HEK293T (cell line): ENCODE measurements at regions of chr20 and their contacts with region 1.

Region 1: GRCh38 chr20:32830437-32830836 is 10.7 kb downstream of the MAPRE1 start:
- DNase-seq: no peak

Region 2: DNA sequence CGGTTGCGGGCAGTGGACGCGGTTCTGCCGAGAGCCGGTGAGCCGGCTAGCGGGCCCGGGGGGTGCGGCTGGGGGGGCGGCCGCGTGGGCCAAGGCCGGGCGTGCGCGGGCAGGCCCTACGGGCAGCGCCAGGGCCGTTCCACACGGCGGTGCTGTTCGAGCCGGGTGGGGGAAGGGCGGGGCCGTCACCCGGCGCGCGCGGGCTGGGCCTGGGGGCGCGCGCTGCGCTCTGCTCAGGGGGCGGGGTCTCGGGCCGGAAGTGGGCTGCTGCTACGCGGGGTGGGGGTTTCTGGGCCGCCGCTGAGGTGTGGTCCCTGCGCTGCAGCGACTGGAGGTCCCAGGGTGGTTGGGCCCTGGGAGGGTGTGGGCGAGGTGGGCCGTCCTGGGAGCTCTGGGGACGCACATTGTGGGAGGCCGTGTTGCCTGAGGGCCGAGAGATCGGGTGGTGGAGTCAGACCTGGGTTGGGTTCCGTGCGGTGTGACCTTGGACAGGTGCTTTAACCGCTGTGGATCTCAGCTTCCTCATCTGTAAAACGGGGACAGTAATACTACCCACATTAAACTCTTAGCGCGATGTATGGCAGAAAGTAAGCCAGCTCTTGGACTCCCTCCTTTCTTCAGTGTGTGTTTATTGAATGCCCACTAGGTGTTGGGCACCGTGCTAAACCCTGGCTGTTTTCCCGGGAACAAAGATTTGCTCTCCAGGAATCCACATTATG is 10.3 kb before region 1 on chr20:
- CTCF ChIA-PET with region 1: no interaction called
- POLR2A ChIA-PET with region 1: interaction called, 14 read pairs
- DNase-seq: peak; percentile 87